ENCODE measurements at regions of chr12 and their contacts with region 1.

Region 1: DNA sequence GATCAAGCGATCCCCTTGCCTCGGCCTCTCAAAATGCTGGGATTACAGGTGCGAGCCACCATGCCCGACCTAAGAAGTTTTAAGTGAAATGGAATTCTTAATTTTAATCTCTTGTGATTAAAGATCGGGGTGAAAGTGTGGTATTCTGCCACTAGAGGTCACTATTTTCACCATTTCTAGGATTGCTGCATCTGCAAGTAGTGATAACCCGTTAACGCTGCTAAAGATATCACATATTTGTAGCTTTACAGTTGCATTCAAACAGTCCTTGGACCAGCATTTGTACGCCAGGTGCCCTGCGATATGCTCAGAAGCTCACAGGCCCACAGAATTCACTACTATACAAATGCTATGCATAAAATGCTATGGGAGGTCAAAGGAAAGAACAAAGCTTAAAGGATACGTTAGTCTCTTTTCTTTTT is 19.3 kb downstream of the CCDC62 start:
- DNase-seq: peak; percentile 9
- H3K4me3 ChIP-seq: no peak overlapping the region
- H3K27ac ChIP-seq: no peak overlapping the region
- H3K4me1 ChIP-seq: no peaks in the 10 kb centered on the region
- H3K27me3 ChIP-seq: no peaks in the 10 kb centered on the region
- CTCF ChIP-seq: peak; percentile 42 to 80 (median 66)
- POLR2A ChIP-seq: no peak

Region 2: GRCh38 chr12:122841544-122842321 is 48.0 kb after region 1 on chr12:
- intact Hi-C with region 1: loop called (anchors 5 kb)
- DNase-seq: no peak
- H3K4me3 ChIP-seq: no peak overlapping the region
- H3K27ac ChIP-seq: peak overlapping the region; percentile 45 to 56
- H3K4me1 ChIP-seq: peaks cover 6% of the 10 kb centered on the region
- H3K27me3 ChIP-seq: no peaks in the 10 kb centered on the region
- CTCF ChIP-seq: no peak
- POLR2A ChIP-seq: no peak

Region 3: DNA sequence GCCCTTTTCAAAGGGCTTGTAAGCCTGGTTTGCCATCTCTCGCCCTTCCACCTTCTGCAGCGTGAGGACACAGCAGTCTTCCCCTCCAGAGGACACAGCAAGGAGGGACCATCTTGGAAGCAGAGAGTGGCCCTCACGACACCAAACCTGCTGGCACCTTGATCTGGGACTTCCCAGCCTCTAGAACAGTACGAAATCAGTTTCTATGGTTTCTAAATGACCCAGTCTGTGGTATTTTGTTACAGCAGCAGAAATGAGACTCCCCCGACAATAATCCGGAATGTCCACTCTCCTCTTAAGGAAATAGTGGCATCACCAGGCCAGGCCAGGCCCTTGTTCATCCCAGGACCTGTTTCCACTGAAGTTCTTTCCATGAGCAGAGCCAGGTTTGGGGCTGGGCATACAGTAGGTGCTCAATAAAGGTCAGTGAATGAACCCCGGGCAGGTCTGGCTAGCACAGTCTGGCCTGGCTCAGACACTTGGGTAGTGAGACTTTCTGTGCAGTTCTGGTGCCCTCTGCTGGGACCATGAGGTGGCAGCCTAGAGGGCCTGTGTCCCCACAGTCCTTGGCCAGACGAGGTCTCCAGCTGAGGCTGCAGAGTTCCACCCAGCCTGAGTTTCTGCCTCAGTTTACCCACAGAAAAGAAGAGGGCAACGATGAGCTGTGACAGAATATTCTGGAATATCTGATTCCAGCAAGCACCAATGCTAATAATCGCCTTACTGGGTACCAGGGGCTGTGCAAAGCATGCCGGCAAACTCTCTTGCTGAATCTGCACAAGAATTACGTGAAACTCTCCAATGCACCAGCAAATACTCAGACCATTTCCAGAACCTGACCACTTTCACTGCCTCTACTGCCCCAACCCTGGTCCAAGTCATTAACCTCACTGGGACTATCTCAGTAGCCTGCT is 158.5 kb after region 1 on chr12:
- intact Hi-C with region 1: loop called (anchors 5 kb)
- DNase-seq: peak; percentile 77
- H3K4me3 ChIP-seq: no peak overlapping the region
- H3K27ac ChIP-seq: no peak overlapping the region
- H3K4me1 ChIP-seq: no peaks in the 10 kb centered on the region
- H3K27me3 ChIP-seq: no peaks in the 10 kb centered on the region
- CTCF ChIP-seq: peak; percentile 40 to 95 (median 87)
- POLR2A ChIP-seq: no peak